A549 (cell line): ENCODE measurements at regions of chr1 and their contacts with region 1.

Region 1: GRCh38 chr1:209565759-209566678 is 17.5 kb upstream of the CAMK1G start:
- DNase-seq: peak; percentile 73 to 83
- ATAC-seq: peak; percentile 87 to 96
- H3K4me3 ChIP-seq: no peak overlapping the region
- H3K27ac ChIP-seq: no peak overlapping the region; a peak in 1 of 6 replicates
- H3K4me1 ChIP-seq: no peaks in the 10 kb centered on the region
- CTCF ChIP-seq: peak; percentile 82
- EP300 ChIP-seq: no peak
- POLR2A ChIP-seq: no peak
- RAD21 ChIP-seq: peak; percentile 81 to 83

Region 2: DNA sequence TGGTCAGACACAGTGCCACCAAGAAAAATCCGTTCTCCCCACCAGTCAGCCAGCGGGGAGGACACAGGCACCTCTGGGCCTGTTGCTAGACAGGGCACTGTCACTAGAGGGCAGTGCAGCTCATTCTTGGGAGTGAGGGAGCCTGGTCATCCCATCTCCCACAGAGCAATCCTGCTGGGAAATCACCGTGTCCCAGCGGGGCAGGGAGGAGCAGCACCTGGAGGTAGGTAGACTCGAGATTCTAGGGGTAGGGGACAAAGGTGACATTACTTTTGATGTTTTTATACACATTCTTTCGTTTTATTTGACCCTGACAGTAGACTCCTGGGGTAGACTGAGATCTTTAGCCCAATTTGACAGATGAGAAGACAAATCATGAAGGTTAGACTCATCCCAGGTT is 10.8 kb after region 1 on chr1:
- CTCF ChIA-PET with region 1: interaction called, 32 read pairs
- POLR2A ChIA-PET with region 1: no interaction called
- DNase-seq: peak; percentile 69 to 87
- ATAC-seq: peak; percentile 96 to 100
- H3K4me3 ChIP-seq: no peak overlapping the region
- H3K27ac ChIP-seq: no peak overlapping the region
- H3K4me1 ChIP-seq: no peaks in the 10 kb centered on the region
- CTCF ChIP-seq: peak; percentile 86
- EP300 ChIP-seq: no peak
- POLR2A ChIP-seq: no peak
- RAD21 ChIP-seq: peak; percentile 89 to 92

Region 3: GRCh38 chr1:209627732-209628196 is 61.7 kb after region 1 on chr1:
- CTCF ChIA-PET with region 1: interaction called, 23 read pairs
- POLR2A ChIA-PET with region 1: no interaction called
- DNase-seq: peak; percentile 68 to 69
- ATAC-seq: peak; percentile 84 to 97
- H3K4me3 ChIP-seq: no peak overlapping the region
- H3K27ac ChIP-seq: peak overlapping the region in 1 of 2 experiments; percentile 55; a peak in 3 of 6 replicates
- H3K4me1 ChIP-seq: no peaks in the 10 kb centered on the region
- CTCF ChIP-seq: peak; percentile 87
- EP300 ChIP-seq: no peak
- POLR2A ChIP-seq: no peak
- RAD21 ChIP-seq: peak; percentile 80 to 89

Region 4: DNA sequence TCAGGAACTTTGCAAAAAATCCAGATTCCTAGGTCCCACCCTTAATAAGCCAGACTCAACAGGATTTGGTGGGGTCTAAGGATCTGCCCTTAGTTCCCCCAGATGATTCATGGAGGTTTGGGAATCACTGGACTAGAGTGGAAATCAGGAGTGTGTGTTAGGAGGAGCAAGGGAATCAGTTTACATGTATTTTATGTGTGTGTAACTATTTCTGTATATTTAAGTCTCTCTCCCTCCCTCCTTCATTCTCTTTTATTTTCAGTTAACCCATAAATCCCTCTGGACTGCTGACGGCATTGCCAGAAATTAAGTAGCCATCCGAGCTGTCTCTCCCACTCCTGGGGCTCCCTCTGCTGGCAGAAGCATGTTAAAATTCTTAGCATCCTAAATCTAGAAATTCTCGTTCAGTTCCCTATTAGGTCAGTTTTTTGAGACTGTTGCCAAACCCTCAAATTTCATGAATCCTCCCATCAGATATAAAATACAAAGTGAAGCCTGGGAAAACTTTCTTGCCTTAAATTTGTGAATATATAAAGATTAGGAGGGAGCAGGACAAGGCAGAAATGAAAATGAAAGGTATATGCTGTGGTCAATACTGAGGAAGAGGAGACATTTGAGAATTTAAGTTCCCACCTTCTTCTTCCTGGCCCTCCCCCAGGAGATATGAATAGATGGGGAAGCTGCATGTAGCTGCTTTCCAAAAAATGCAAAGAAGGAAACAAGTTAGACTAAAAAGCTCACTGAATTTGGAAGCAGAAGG is 126.9 kb after region 1 on chr1:
- CTCF ChIA-PET with region 1: interaction called, 93 read pairs
- POLR2A ChIA-PET with region 1: no interaction called
- DNase-seq: peak; percentile 61 to 79
- ATAC-seq: peak; percentile 62 to 76; a peak in 4 of 6 replicates
- H3K4me3 ChIP-seq: no peak overlapping the region
- H3K27ac ChIP-seq: peak overlapping the region; percentile 42 to 58; a peak in 5 of 6 replicates
- H3K4me1 ChIP-seq: peaks cover 38% of the 10 kb centered on the region
- CTCF ChIP-seq: peak; percentile 98
- EP300 ChIP-seq: no peak
- POLR2A ChIP-seq: no peak
- RAD21 ChIP-seq: peak; percentile 98